ENCODE measurements at regions of chr1 and their contacts with region 1.

Region 1: DNA sequence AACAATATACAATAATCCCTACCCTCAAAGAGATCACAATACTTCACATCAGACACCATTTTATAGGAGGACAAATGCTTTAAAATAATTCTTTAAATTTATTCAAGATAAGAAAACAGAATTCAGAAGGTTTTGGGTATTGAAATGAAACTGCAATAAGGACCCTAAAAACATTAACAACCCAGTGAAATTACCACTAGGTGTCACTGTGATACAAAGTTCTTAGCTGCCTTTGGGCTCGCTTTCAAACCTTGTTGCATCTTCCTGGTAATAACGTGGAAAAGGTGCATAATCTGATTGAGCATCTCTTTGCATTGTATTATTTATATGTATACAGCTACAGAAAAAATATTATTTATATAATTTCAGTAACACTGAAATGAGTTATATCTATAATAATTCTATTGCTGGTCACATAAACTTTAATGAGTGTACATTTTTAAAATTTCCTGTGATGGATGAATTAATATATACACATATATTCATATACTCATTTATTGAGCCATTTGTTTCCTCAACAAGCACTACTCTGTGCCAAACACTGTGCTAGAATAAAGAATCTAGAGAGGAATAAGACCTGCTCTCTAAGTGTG is 185.2 kb downstream of the FAF1 start:
- DNase-seq: peak in 1 of 3 donors; percentile 34
- ATAC-seq: peak; percentile 79
- H3K4me3 ChIP-seq: no peak overlapping the region
- H3K4me1 ChIP-seq: peaks cover 5% of the 10 kb centered on the region
- CTCF ChIP-seq: peak; percentile 32

Region 2: GRCh38 chr1:50322579-50322978 is 452.3 kb before region 1 on chr1:
- intact Hi-C with region 1: no loop called
- DNase-seq: no peak
- ATAC-seq: no peak
- H3K4me3 ChIP-seq: no peak overlapping the region
- H3K4me1 ChIP-seq: no peaks in the 10 kb centered on the region
- CTCF ChIP-seq: no peak

Region 3: GRCh38 chr1:51100264-51100880 is 325.5 kb after region 1 on chr1:
- intact Hi-C with region 1: no loop called
- DNase-seq: no peak
- ATAC-seq: no peak
- H3K4me3 ChIP-seq: no peak overlapping the region
- H3K4me1 ChIP-seq: no peaks in the 10 kb centered on the region
- CTCF ChIP-seq: no peak

Region 4: DNA sequence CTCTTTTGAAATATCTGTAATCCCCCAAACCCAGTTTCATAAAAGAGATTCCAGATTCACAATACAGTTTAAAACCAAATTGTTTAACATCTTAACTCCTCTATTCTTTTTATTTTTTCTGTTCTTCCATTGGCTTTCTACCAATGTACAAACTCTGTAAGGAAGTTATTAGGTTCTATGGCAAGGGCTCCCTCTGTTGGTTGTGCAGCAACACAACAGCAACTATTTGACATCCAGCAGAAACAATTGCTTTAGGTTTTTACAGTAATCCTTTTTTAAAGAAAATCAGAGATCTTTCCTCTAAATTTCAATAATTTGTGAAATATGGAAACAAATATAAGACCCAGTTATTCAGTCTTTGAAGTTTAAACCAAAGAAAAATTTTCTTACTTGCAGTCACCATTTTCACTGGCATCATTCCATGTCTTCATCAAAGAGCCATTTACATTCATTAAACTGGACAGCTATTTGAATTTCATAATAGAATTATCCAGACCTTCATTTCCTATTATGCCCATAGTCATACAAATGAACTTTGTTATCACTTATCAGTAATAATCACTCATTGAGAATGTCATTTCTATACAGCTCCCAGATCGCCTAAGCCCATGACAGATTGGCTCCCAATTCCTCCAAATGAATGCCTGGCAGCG is 414.7 kb after region 1 on chr1:
- intact Hi-C with region 1: loop called (anchors 10 kb)
- DNase-seq: peak in 1 of 3 donors; percentile 45
- ATAC-seq: peak; percentile 72
- H3K4me3 ChIP-seq: no peak overlapping the region
- H3K4me1 ChIP-seq: no peaks in the 10 kb centered on the region
- CTCF ChIP-seq: peak; percentile 70

Measured in mucosa of descending colon (tissue), 3 donors.